ENCODE measurements at regions of chr11 and their contacts with region 1.

Region 1: GRCh38 chr11:127859941-127860354 is 727.4 kb downstream of the ETS1 start:
- DNase-seq: no peak
- ATAC-seq: no peak
- H3K4me3 ChIP-seq: no peak overlapping the region
- H3K4me3 Mint-ChIP-seq: no peak overlapping the region
- H3K27ac ChIP-seq: no peak overlapping the region
- H3K27ac Mint-ChIP-seq: no peak overlapping the region
- H3K4me1 ChIP-seq: no peaks in the 10 kb centered on the region
- H3K4me1 Mint-ChIP-seq: no peaks in the 10 kb centered on the region
- H3K27me3 ChIP-seq: no peaks in the 10 kb centered on the region
- H3K27me3 Mint-ChIP-seq: peaks cover 5% of the 10 kb centered on the region
- CTCF ChIP-seq: no peak

Region 2: DNA sequence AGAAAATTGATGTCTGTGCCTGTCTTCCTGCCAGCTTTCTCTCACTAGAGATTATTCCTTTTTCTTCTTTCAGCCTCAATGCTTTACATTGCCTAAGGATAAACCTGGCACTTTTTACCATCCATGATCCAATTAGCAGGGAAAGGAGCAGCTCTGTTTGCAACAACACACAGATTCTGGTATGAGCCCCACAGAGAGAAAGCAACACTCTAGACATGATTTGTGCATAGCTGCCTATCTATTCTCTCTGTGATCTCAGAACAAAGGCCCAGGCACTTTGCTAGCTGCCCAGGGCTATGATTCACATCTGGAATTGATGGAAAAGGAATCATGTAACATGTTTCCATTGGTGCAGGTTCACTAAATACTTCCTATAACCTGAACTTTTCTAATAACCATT is 42.4 kb after region 1 on chr11:
- CTCF ChIA-PET with region 1: no interaction called
- POLR2A ChIA-PET with region 1: no interaction called
- intact Hi-C with region 1: loop called (anchors 1 kb)
- DNase-seq: no peak
- ATAC-seq: no peak
- H3K4me3 ChIP-seq: no peak overlapping the region
- H3K4me3 Mint-ChIP-seq: no peak overlapping the region
- H3K27ac ChIP-seq: no peak overlapping the region
- H3K27ac Mint-ChIP-seq: no peak overlapping the region
- H3K4me1 ChIP-seq: no peaks in the 10 kb centered on the region
- H3K4me1 Mint-ChIP-seq: no peaks in the 10 kb centered on the region
- H3K27me3 ChIP-seq: no peaks in the 10 kb centered on the region
- H3K27me3 Mint-ChIP-seq: no peaks in the 10 kb centered on the region
- CTCF ChIP-seq: no peak

Measured in B cell (primary cell).